GM10248 (cell line): ENCODE measurements at regions of chr7 and their contacts with region 1.

Region 1: DNA sequence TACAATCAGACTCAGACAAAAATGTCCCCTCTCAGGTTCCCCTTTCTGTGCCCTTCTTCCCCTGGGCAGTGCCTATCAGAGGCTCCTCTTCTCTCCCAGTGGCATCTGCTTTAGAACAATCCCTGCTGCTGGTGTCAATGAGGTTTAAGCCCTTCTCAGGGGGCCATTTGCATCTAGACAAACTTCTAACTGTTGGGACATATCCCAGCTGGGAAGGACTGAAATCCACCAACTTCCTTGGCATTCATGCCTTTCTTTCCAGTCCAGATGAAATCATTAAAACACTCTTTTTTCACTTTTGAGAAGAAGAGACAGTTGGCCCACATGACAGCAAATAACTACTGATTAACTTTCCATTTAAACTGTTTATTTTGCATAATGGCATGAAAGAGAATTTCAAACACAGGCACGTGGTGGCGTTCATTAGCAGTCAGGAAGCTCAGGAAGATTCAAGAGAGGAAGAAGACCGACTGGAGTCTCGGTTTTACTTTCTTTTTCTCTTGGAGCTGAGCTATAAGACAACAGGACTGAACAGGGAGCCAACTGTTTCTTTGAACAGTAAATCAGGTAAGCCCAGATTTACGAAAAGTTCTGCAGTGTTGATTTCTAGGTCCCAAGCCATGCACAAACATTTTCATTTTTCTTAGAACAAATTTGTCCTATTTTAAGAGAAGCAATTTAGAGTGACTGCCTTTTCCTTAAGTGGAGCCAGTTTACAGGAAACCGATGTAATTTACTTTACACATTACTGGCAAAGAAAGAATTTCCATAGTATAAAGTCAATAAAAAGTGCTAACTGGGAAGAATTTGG is at the start of gene GIMAP2:
- DNase-seq: peak; percentile 61
- CTCF ChIP-seq: peak; percentile 22

Region 2: DNA sequence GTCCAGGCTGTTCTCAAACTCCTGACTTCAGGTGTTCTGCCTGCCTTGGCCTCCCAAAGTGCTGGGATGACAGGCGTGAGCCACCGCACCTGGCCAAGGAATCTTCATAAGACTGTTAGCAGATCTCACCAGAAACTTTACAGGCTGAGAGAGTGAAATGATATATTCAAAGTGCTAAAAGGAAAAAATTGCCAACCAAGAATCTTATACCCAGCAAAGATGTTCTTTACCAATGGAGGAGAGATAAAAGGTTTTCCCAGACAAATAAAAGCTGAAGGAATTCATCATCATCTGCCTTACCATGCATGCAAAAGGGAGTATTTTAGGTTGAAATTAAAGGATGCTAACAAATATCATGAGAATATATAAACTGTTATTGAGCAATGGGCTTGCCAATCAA is 147.2 kb before region 1 on chr7:
- CTCF ChIA-PET with region 1: no interaction called
- POLR2A ChIA-PET with region 1: no interaction called
- DNase-seq: no peak
- CTCF ChIP-seq: no peak

Region 3: GRCh38 chr7:150556521-150557138 is 128.8 kb before region 1 on chr7:
- CTCF ChIA-PET with region 1: no interaction called
- POLR2A ChIA-PET with region 1: no interaction called
- DNase-seq: no peak
- CTCF ChIP-seq: no peak

Region 4: GRCh38 chr7:150665896-150666295 is 19.5 kb before region 1 on chr7:
- CTCF ChIA-PET with region 1: interaction called, 10 read pairs
- POLR2A ChIA-PET with region 1: no interaction called
- DNase-seq: no peak
- CTCF ChIP-seq: no peak